A673 (cell line): ENCODE measurements at regions of chr11 and their contacts with region 1.

Region 1: GRCh38 chr11:69683764-69684333 is 8.7 kb upstream of the LTO1 start:
- DNase-seq: peak; percentile 81
- H3K4me3 ChIP-seq: no peak overlapping the region
- H3K27ac ChIP-seq: no peak overlapping the region
- H3K4me1 ChIP-seq: no peaks in the 10 kb centered on the region
- H3K27me3 ChIP-seq: no peaks in the 10 kb centered on the region
- CTCF ChIP-seq: peak; percentile 83

Region 2: DNA sequence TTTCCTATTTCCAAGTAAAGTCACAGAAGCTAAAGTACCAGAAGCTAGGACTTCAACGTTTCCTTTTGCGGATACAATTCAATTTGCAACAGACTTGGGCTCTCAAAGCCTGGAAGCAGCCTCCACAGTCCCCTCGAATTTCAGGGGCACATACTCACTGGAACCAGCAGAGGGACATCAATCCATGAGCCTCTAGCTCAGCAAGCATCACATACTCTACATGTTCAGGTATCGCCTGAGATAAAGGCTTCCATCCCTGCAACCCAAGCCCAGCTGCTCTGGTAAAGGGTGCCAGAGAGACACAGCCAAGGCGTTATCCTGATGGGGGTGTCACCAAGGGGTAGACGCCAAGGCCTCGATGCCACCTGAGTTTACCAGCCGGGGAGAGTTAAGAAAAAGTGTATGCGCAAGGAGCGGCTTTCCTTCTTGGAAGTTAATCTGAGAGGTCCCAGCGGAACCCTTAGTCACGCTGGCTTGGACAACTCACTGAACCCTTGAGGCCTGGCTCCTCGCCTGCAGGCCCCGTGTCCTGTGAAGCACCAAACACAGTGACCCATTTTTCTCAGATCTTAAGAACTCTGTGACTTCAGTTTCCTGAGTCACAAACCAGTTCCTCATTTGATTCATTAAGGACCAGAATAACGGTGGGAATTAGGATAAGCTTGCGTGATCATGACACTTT is 21.7 kb before region 1 on chr11:
- CTCF ChIA-PET with region 1: interaction called, 13 read pairs
- POLR2A ChIA-PET with region 1: no interaction called
- intact Hi-C with region 1: no loop called
- DNase-seq: peak; percentile 62
- H3K4me3 ChIP-seq: no peak overlapping the region
- H3K27ac ChIP-seq: no peak overlapping the region
- H3K4me1 ChIP-seq: peaks cover 8% of the 10 kb centered on the region
- H3K27me3 ChIP-seq: no peaks in the 10 kb centered on the region
- CTCF ChIP-seq: peak; percentile 54

Region 3: GRCh38 chr11:69888483-69889076 is 204.7 kb after region 1 on chr11:
- CTCF ChIA-PET with region 1: interaction called, 9 read pairs
- POLR2A ChIA-PET with region 1: no interaction called
- intact Hi-C with region 1: loop called (anchors 2 kb)
- DNase-seq: peak; percentile 79
- H3K4me3 ChIP-seq: no peak overlapping the region
- H3K27ac ChIP-seq: no peak overlapping the region
- H3K4me1 ChIP-seq: no peaks in the 10 kb centered on the region
- H3K27me3 ChIP-seq: peaks cover 5% of the 10 kb centered on the region
- CTCF ChIP-seq: peak; percentile 99

Region 4: DNA sequence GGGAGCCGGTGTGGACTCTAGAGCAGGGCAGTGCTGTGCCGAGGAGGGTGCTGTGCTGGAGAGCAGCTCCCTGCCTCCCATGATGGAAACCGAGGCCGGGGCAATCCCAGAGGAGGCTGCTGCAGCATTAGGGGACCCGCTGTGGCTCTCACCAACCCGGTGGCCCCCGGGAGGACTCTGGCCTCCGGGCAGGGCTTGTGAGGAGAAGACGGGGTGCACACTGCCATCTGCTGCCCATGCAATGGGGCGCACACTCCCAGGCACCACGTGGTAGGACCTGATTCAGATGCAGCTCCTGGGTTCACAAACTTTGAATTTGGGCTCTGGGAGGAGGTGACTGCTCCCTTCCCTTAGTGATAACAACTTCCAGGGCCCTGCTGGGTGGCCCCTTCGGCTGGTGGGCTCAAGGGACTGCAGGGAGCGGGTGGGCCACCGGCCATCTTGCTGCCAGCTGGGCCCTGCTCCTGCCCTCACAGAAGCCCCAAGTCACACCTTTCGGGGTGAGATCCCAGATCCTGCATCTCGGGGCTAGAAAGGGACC is 229.1 kb after region 1 on chr11:
- CTCF ChIA-PET with region 1: no interaction called
- POLR2A ChIA-PET with region 1: no interaction called
- intact Hi-C with region 1: loop called (anchors 1 kb)
- DNase-seq: peak; percentile 44
- H3K4me3 ChIP-seq: no peak overlapping the region
- H3K27ac ChIP-seq: no peak overlapping the region
- H3K4me1 ChIP-seq: peaks cover 6% of the 10 kb centered on the region
- H3K27me3 ChIP-seq: no peaks in the 10 kb centered on the region
- CTCF ChIP-seq: peak; percentile 62

Region 5: DNA sequence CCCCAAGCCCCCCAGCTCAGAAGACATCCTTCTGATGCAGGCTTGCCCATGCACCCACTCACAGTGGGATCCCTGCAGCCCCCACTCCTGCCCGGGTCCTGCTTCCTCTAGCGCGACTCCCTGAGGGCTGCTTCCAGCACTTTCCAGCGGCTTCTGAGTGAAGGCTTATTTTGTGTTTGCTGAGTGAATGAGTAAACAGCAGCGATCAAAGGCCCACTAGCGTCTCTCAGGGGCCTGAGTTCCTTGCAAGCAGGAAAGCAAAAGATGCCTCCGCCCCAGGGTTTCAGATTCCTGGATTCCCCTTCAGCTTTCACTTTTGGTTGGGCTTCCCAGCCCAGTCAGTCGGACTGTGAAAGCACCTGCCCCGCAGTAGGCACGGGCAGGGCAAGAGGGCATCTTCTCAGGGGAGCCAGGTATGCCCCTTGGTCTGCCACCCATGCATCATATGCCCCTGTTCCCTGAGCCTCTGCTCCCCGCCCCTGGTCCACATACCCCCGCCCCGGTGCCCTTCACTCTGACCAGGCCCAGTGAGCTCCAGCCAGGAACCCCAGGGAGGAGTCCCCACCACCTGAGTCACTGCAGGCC is 528.5 kb after region 1 on chr11:
- CTCF ChIA-PET with region 1: no interaction called
- POLR2A ChIA-PET with region 1: no interaction called
- intact Hi-C with region 1: no loop called
- DNase-seq: no peak
- H3K4me3 ChIP-seq: no peak overlapping the region
- H3K27ac ChIP-seq: no peak overlapping the region
- H3K4me1 ChIP-seq: no peaks in the 10 kb centered on the region
- H3K27me3 ChIP-seq: no peaks in the 10 kb centered on the region
- CTCF ChIP-seq: no peak